A549 (cell line): ENCODE measurements at regions of chr5 and their contacts with region 1.

Region 1: DNA sequence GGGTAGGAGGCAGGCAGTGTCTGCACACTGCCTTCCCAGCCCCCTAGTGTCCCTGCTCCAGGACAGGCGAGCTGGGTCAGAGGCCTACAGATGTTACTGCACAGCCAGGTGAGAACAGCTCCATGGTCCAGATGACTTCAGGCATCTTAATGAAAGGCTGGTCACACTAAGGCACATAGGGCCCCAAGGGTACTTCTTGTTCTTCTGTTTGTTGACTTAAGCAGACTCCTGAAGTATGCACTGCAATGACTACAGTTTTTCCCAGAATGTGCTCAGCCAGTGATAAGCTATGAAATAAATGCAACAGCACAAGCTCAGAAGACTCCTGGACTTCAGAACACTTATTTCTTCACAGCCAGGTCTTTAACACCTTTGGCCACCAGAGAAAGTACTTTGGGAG is 27.3 kb downstream of the ATPSCKMT start:
- DNase-seq: no peak
- ATAC-seq: no peak
- H3K4me3 ChIP-seq: no peak overlapping the region
- H3K27ac ChIP-seq: no peak overlapping the region; a peak in 1 of 6 replicates
- H3K4me1 ChIP-seq: no peaks in the 10 kb centered on the region
- CTCF ChIP-seq: no peak
- EP300 ChIP-seq: no peak
- POLR2A ChIP-seq: no peak
- RAD21 ChIP-seq: no peak

Region 2: GRCh38 chr5:10233505-10233904 is 11.2 kb after region 1 on chr5:
- CTCF ChIA-PET with region 1: interaction called, 12 read pairs
- POLR2A ChIA-PET with region 1: interaction called, 4 read pairs
- DNase-seq: peak; percentile 47 to 79
- ATAC-seq: peak; percentile 77 to 86
- H3K4me3 ChIP-seq: no peak overlapping the region
- H3K27ac ChIP-seq: peak overlapping the region; percentile 58 to 87
- H3K4me1 ChIP-seq: peaks cover 29% of the 10 kb centered on the region
- CTCF ChIP-seq: peak; percentile 53
- EP300 ChIP-seq: no peak
- POLR2A ChIP-seq: no peak
- RAD21 ChIP-seq: peak; percentile 70 to 73